IMR-90 (cell line): ENCODE measurements at regions of chr6 and their contacts with region 1.

Region 1: GRCh38 chr6:53979468-53980067 is 131.7 kb upstream of the MLIP start:
- DNase-seq: peak; percentile 61
- ATAC-seq: peak; percentile 44; the same call in 1 of the 2 replicates
- H3K4me3 ChIP-seq: no peak overlapping the region
- H3K27ac ChIP-seq: no peak overlapping the region
- H3K4me1 ChIP-seq: peaks cover 4% of the 10 kb centered on the region
- H3K27me3 ChIP-seq: no peaks in the 10 kb centered on the region
- CTCF ChIP-seq: peak; percentile 83
- POLR2A ChIP-seq: no peak
- RAD21 ChIP-seq: peak; percentile 79

Region 2: DNA sequence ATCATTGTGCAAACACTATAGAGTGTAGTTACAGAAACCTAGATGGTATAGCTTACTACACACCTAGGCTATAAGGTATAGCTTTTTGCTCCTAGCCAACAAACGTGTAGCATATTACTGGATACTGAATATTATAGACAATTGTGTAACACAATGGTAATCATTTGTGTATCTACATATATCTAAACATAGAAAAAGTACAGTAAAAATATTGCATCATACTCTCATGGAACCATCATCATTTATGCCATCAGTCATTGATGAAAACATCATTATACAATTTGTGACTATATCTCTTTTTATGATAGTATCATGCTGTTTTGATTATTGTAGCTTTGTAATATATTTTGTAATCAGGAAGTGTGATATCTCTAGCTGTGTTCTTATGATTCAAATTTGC is 1173.7 kb after region 1 on chr6:
- CTCF ChIA-PET with region 1: no interaction called
- POLR2A ChIA-PET with region 1: no interaction called
- dilution Hi-C with region 1: no loop called
- in situ Hi-C with region 1: no loop called
- intact Hi-C with region 1: loop called (anchors 5 kb)
- DNase-seq: no peak
- ATAC-seq: no peak
- H3K4me3 ChIP-seq: no peak overlapping the region
- H3K27ac ChIP-seq: no peak overlapping the region
- H3K4me1 ChIP-seq: no peaks in the 10 kb centered on the region
- H3K27me3 ChIP-seq: no peaks in the 10 kb centered on the region
- CTCF ChIP-seq: no peak
- POLR2A ChIP-seq: no peak
- RAD21 ChIP-seq: no peak